Activated CD4-positive, alpha-beta T cell treated with anti-CD3 and anti-CD28 coated beads, Interleukin-2, amount 10 ng/mL, durations not matched to agents 24 days and 14 days (primary cell): ENCODE measurements at regions of chrX and their contacts with region 1.

Region 1: GRCh38 chrX:12946838-12947544 is 27.9 kb upstream of the TMSB4X start:
- DNase-seq: peak; percentile 92
- H3K4me3 Mint-ChIP-seq: peak overlapping the region; percentile 66
- H3K27ac Mint-ChIP-seq: peak overlapping the region; percentile 96
- H3K4me1 Mint-ChIP-seq: peaks cover 48% of the 10 kb centered on the region
- H3K27me3 Mint-ChIP-seq: no peaks in the 10 kb centered on the region

Region 2: GRCh38 chrX:11758400-11759171 is 1188.4 kb before region 1 on chrX:
- intact Hi-C with region 1: loop called (anchors 10 kb)
- DNase-seq: peak; percentile 96
- H3K4me3 Mint-ChIP-seq: peak overlapping the region; percentile 95
- H3K27ac Mint-ChIP-seq: peak overlapping the region; percentile 99
- H3K4me1 Mint-ChIP-seq: peaks cover 22% of the 10 kb centered on the region
- H3K27me3 Mint-ChIP-seq: peaks cover 25% of the 10 kb centered on the region

Region 3: GRCh38 chrX:12595720-12596119 is 351.3 kb before region 1 on chrX:
- intact Hi-C with region 1: no loop called
- DNase-seq: no peak
- H3K4me3 Mint-ChIP-seq: no peak overlapping the region
- H3K27ac Mint-ChIP-seq: no peak overlapping the region
- H3K4me1 Mint-ChIP-seq: no peaks in the 10 kb centered on the region
- H3K27me3 Mint-ChIP-seq: no peaks in the 10 kb centered on the region

Region 4: GRCh38 chrX:12984629-12985319 is 37.8 kb after region 1 on chrX:
- intact Hi-C with region 1: loop called (anchors 5 kb)
- DNase-seq: peak; percentile 90
- H3K4me3 Mint-ChIP-seq: peak overlapping the region; percentile 62
- H3K27ac Mint-ChIP-seq: peak overlapping the region; percentile 94
- H3K4me1 Mint-ChIP-seq: peaks cover 57% of the 10 kb centered on the region
- H3K27me3 Mint-ChIP-seq: no peaks in the 10 kb centered on the region

Region 5: GRCh38 chrX:13029831-13030771 is 83.1 kb after region 1 on chrX:
- intact Hi-C with region 1: no loop called
- DNase-seq: peak; percentile 53
- H3K4me3 Mint-ChIP-seq: peak overlapping the region; percentile 58
- H3K27ac Mint-ChIP-seq: peak overlapping the region; percentile 84
- H3K4me1 Mint-ChIP-seq: peaks cover 41% of the 10 kb centered on the region
- H3K27me3 Mint-ChIP-seq: no peaks in the 10 kb centered on the region

Region 6: DNA sequence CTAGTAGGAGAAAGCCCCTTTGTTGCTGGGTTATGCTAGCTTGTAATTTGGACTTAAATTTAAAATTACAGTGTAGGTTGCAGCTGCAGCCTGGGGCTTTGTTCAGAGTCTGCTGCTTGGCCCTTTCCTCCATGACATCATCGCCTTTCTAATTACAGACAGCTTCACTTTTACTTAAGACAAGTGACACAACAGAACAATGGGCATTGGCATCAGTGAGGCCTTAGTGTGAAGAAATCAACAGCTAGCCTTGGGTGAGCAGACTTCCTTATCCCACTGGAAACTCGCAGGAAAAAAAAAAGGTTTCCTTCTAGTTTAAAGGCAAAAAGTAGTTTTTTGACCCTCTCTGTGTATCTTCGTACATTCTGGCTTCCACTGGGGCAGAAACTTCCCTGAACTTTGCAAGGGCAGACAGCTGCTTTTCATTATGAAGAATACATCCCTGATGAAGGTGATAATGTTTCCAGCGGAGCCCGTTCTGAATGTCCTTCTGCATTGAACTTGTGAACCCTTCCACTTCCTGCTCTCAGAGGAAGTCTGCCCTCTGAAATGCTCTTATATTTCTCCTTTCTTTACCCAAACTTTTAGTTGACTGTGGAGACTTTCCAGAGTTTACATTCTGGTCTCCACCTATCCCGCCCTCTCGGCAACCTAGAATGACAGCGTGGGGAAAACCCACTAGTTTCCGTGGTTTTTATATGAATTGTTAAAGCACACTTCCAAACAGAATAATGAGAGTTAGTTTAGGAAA is 220.7 kb after region 1 on chrX:
- intact Hi-C with region 1: loop called (anchors 5 kb)
- DNase-seq: peak; percentile 62
- H3K4me3 Mint-ChIP-seq: peak overlapping the region; percentile 56
- H3K27ac Mint-ChIP-seq: peak overlapping the region; percentile 79
- H3K4me1 Mint-ChIP-seq: peaks cover 19% of the 10 kb centered on the region
- H3K27me3 Mint-ChIP-seq: no peaks in the 10 kb centered on the region

Region 7: DNA sequence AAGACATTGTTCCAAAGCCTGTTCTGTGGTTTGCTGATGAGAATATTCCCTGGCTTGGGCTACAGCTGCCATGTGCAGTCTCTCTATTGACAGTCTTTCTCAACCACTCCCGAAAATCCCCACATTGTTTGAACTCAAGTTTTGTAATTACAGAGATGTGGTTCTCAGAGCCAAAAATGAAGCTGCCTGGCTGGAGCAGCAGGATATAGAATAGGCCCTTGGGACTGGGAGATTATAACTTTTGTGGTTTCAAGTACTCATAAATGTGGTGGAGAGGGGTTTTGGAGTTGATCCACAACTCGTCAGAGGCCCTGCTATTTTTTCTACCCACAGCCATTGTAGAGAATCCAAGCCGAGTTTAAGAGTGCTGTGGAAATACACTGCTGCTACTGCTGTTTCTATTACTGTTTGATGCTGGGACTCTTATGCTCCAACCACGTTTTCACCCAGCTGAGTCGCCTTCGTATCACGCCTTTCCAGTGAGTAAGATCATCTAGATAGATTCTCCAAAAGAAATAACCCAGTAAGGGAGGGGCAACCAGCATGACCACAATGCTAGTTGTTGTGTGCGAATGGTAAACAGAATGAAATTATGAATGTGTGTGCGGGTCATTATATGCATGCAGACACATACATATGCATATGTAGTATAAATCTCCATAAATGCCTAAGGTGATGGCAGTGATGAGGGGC is 430.0 kb after region 1 on chrX:
- intact Hi-C with region 1: loop called (anchors 10 kb)
- DNase-seq: no peak
- H3K4me3 Mint-ChIP-seq: no peak overlapping the region
- H3K27ac Mint-ChIP-seq: no peak overlapping the region
- H3K4me1 Mint-ChIP-seq: peaks cover 26% of the 10 kb centered on the region
- H3K27me3 Mint-ChIP-seq: no peaks in the 10 kb centered on the region

Region 8: DNA sequence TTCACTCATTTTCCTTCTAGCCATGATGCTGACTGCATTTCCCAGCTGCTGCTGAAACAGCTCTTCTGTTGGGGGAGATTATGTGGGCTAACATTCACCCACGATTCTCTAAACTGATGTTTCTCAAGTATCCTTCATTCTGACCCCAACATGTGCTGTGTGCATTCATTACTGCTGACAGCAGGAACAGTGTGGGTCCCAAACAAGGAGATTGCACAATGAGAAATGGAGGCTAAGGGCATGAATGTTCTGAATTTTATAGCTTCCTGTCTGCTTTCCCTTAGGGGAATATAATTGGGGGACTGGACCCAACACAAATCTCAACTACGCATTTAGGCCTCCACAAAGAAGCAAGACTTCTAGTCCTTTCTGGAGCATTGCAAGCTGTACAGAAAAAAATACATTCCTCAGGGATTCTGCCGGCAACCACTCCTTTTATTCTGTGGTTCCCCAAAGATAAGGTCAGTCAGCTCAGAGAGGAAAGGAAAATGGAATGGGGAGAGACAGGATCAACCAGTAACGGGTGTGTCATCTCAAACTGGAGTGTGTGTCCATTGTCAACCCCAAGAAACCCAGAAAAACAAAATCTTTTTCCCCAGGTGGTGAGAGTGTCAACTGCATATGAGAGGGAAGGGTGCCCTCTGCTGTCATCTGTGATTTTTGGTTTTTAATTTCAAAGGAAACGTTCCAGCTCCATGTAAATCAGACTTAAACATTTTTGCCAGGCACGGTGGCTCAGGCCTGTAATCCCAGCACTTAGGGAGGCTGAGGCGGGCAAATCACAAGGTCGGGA is 540.9 kb after region 1 on chrX:
- intact Hi-C with region 1: loop called (anchors 1 kb)
- DNase-seq: peak; percentile 85
- H3K4me3 Mint-ChIP-seq: no peak overlapping the region
- H3K27ac Mint-ChIP-seq: peak overlapping the region; percentile 81
- H3K4me1 Mint-ChIP-seq: peaks cover 20% of the 10 kb centered on the region
- H3K27me3 Mint-ChIP-seq: no peaks in the 10 kb centered on the region

Region 9: DNA sequence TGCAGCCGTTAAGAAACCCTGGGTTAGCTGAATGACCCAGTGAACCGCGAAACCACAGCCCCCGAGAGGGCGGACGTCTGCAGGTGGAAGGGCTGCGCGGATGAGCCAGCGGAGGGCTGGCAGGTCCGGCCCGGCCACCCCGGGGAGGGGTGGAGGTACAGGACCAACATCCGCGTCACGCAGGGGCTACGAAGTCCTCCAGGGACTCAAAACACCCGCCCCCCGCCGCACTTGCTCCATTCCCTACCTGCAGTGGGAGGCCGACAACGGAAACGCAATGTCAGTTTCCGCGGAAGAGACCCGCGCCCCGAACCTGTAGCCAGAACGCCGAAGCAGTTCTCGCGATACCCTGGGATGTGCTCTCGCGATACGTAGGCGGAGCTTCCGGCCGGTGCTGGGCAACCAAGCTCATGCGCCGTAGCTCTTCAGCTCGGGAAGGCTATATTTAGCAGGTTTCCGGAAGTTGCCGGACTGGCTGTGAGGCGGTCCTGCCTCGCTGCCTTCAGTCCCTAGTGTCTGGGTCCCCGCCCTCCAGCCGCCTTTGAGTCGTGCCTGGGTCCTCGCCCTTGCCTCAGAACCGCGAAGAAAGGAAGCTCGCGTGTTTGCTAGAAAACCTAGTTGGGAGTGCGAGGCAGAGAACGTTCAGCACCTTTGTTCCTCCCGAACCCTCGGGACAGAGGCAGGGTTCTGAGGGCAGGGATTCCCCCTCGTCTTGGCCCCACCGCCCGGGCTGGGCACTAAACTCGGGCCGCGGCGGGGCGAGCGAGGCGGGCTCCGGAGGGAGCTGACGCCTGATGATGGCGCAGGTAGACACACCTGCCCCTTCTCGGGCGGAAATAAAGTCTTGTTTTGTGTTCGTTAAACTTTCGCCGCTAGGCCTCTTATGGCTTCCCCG is 787.5 kb after region 1 on chrX and contains the starts of genes OFD1 and TRAPPC2:
- intact Hi-C with region 1: loop called (anchors 10 kb)
- DNase-seq: peak; percentile 97
- H3K4me3 Mint-ChIP-seq: peak within 1 kb of the TSS; percentile 99
- H3K27ac Mint-ChIP-seq: peak within 1 kb of the TSS; percentile 97
- H3K4me1 Mint-ChIP-seq: peaks cover 35% of the 10 kb centered on the region
- H3K27me3 Mint-ChIP-seq: no peaks in the 10 kb centered on the region
- total RNA-seq, gene OFD1: 18.3 and 19.3 TPM in 2 replicates
- total RNA-seq, gene TRAPPC2: 13.6 and 15.4 TPM in 2 replicates